Naive thymus-derived CD4-positive, alpha-beta T cell (primary cell): ENCODE measurements at regions of chr5 and their contacts with region 1.

Region 1: GRCh38 chr5:41843456-41844370 is 26.5 kb downstream of the OXCT1 start:
- DNase-seq: peak in 7 of 9 donors; percentile 8 to 41 (median 26)
- ATAC-seq: peak; percentile 78
- H3K4me3 ChIP-seq: no peak overlapping the region
- H3K4me3 Mint-ChIP-seq: no peak overlapping the region
- H3K27ac ChIP-seq: no peak overlapping the region
- H3K27ac Mint-ChIP-seq: no peak overlapping the region
- H3K4me1 ChIP-seq: no peaks in the 10 kb centered on the region
- H3K4me1 Mint-ChIP-seq: peaks cover 0 to 9% (median 0%) of the 10 kb centered on the region in 7 donors
- H3K27me3 ChIP-seq: no peaks in the 10 kb centered on the region
- H3K27me3 Mint-ChIP-seq: no peaks in the 10 kb centered on the region

Region 2: GRCh38 chr5:41695920-41696582 is 147.7 kb before region 1 on chr5:
- CTCF ChIA-PET with region 1: no interaction called
- POLR2A ChIA-PET with region 1: no interaction called
- intact Hi-C with region 1: loop called in 1 of 2 experiments (anchors 1 kb)
- DNase-seq: no peak
- ATAC-seq: no peak
- H3K4me3 ChIP-seq: no peak overlapping the region
- H3K4me3 Mint-ChIP-seq: no peak overlapping the region
- H3K27ac ChIP-seq: no peak overlapping the region
- H3K27ac Mint-ChIP-seq: peak overlapping the region in 1 of 9 donors; percentile 5
- H3K4me1 ChIP-seq: no peaks in the 10 kb centered on the region
- H3K4me1 Mint-ChIP-seq: no peaks in the 10 kb centered on the region
- H3K27me3 ChIP-seq: no peaks in the 10 kb centered on the region
- H3K27me3 Mint-ChIP-seq: peaks cover 10 to 40% (median 14%) of the 10 kb centered on the region in 5 donors

Region 3: GRCh38 chr5:41707853-41708603 is 135.7 kb before region 1 on chr5:
- CTCF ChIA-PET with region 1: no interaction called
- POLR2A ChIA-PET with region 1: no interaction called
- intact Hi-C with region 1: loop called in 1 of 2 experiments (anchors 1 kb)
- DNase-seq: no peak
- ATAC-seq: no peak
- H3K4me3 ChIP-seq: no peak overlapping the region
- H3K4me3 Mint-ChIP-seq: no peak overlapping the region
- H3K27ac ChIP-seq: no peak overlapping the region
- H3K27ac Mint-ChIP-seq: no peak overlapping the region
- H3K4me1 ChIP-seq: no peaks in the 10 kb centered on the region
- H3K4me1 Mint-ChIP-seq: no peaks in the 10 kb centered on the region
- H3K27me3 ChIP-seq: peaks cover 0 to 3% of the 10 kb centered on the region in 2 donors
- H3K27me3 Mint-ChIP-seq: peaks cover 5 to 29% (median 7%) of the 10 kb centered on the region in 5 donors

Region 4: DNA sequence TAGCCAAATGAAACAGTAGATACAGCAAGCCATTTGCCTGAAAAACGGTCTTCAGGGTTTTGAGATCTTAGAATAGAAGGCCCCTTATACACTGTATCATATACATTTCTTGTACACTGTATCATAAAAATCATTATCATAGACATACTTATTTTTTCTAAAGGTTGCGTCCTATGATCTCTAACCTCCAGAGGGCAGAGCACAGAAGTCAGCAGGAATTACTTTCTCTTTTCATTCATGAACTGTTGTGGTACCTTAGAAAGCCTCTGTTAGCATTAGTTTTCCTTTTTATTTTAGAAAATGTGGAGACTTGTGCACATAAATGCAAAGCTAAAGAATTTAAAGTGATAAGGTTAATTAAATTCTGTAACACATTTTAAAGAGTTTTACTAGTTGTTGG is 88.9 kb before region 1 on chr5:
- CTCF ChIA-PET with region 1: no interaction called
- POLR2A ChIA-PET with region 1: no interaction called
- intact Hi-C with region 1: loop called (anchors 1 to 5 kb)
- DNase-seq: no peak
- ATAC-seq: no peak
- H3K4me3 ChIP-seq: no peak overlapping the region
- H3K4me3 Mint-ChIP-seq: no peak overlapping the region
- H3K27ac ChIP-seq: no peak overlapping the region
- H3K27ac Mint-ChIP-seq: peak overlapping the region in 1 of 9 donors; percentile 22
- H3K4me1 ChIP-seq: no peaks in the 10 kb centered on the region
- H3K4me1 Mint-ChIP-seq: peaks cover 0 to 25% (median 11%) of the 10 kb centered on the region in 7 donors
- H3K27me3 ChIP-seq: no peaks in the 10 kb centered on the region
- H3K27me3 Mint-ChIP-seq: no peaks in the 10 kb centered on the region

Region 5: GRCh38 chr5:41878643-41879478 is 35.1 kb after region 1 on chr5:
- CTCF ChIA-PET with region 1: no interaction called
- POLR2A ChIA-PET with region 1: no interaction called
- intact Hi-C with region 1: no loop called
- DNase-seq: no peak
- ATAC-seq: no peak
- H3K4me3 ChIP-seq: no peak overlapping the region
- H3K4me3 Mint-ChIP-seq: no peak overlapping the region
- H3K27ac ChIP-seq: no peak overlapping the region
- H3K27ac Mint-ChIP-seq: no peak overlapping the region
- H3K4me1 ChIP-seq: no peaks in the 10 kb centered on the region
- H3K4me1 Mint-ChIP-seq: peaks cover 0 to 16% (median 7%) of the 10 kb centered on the region in 7 donors
- H3K27me3 ChIP-seq: no peaks in the 10 kb centered on the region
- H3K27me3 Mint-ChIP-seq: peaks cover 7 to 16% (median 12%) of the 10 kb centered on the region in 5 donors